CD4-positive, alpha-beta memory T cell (primary cell): ENCODE measurements at regions of chr12 and their contacts with region 1.

Region 1: DNA sequence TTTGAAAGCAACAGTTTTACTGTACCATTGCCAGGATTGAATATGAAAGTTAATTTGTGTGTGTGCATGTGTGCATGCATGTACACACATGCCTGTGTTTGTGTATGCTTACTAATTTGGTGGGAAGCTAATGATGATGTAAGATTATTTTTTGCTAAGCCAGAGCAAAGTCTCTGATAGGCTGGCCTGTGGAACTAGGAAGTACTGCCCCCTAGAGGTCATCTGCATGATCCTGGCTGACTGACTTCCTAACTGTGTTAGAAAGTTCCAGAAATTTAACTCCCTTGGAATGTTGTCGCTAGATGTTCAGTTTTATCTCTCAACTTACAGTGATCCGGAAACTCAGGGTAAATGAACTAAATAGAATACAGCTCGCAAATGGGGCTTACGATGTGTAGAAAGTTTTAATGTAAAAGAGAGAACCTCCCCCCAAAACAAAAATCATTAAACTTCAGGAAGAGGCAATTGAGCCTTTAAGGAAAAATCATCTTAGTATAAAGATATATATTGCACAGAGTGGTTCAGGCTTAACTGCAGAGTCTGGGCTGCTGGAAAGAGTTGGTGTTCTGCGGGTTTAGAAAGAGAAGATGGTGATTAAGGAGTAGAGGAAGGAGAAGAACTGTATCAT is 34.3 kb upstream of the SLC38A1 start:
- DNase-seq: peak; percentile 52 to 69 (median 62)
- H3K4me3 ChIP-seq: no peak overlapping the region
- H3K4me3 Mint-ChIP-seq: no peak overlapping the region
- H3K27ac ChIP-seq: no peak overlapping the region
- H3K27ac Mint-ChIP-seq: no peak overlapping the region
- H3K4me1 ChIP-seq: no peaks in the 10 kb centered on the region
- H3K4me1 Mint-ChIP-seq: peaks cover 3 to 4% (median 4%) of the 10 kb centered on the region in 4 donors
- H3K27me3 ChIP-seq: no peaks in the 10 kb centered on the region
- H3K27me3 Mint-ChIP-seq: no peaks in the 10 kb centered on the region

Region 2: DNA sequence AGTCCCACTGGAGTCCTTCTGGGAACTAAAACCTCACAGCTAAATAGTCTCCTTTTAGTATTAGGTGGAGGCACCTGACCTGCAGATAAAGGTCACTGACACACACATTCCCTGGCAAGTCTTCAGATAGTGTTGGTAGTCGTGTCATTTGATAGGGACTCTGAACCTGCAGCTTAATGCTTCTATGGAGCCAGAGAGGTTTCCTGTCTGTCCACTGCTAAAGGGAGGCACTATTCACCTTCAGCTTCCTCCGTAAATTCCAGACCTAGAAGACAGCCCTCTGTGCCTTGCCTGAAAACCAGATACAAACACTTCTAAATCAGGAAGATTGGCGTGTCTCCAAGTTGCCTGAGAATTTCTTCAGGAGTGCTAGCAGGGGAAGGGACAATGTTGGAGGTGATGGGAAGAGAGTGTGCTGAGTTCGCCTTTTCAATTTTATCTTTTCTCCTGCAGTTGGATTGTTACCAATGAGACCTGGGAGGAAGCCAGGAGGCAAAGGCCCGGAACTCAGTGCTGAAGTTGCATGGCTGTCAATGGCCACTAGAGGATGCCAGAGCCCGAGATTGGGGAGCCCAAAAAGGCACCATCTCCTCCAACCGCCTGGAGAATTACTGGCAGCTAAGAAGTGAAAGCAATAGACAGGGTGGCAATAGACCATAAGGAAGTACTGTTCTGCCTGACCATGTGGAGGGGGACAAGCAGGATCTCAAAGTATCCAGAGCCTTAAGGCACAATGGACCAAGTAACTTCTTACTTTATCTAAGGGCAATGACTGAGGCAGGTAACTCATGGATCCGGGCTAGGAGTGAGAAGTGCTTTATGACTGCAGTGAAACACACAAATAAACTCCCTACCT is 231.2 kb before region 1 on chr12:
- CTCF ChIA-PET with region 1: interaction called, 3 read pairs
- POLR2A ChIA-PET with region 1: no interaction called
- intact Hi-C with region 1: loop called (anchors 1 kb)
- DNase-seq: peak; percentile 42 to 68 (median 48)
- H3K4me3 ChIP-seq: no peak overlapping the region
- H3K4me3 Mint-ChIP-seq: no peak overlapping the region
- H3K27ac ChIP-seq: no peak overlapping the region
- H3K27ac Mint-ChIP-seq: peak overlapping the region in 2 of 7 donors; percentile 2 to 15
- H3K4me1 ChIP-seq: no peaks in the 10 kb centered on the region
- H3K4me1 Mint-ChIP-seq: peaks cover 0 to 5% (median 2%) of the 10 kb centered on the region in 4 donors
- H3K27me3 ChIP-seq: no peaks in the 10 kb centered on the region
- H3K27me3 Mint-ChIP-seq: peaks cover 3 to 5% of the 10 kb centered on the region in 2 donors

Region 3: DNA sequence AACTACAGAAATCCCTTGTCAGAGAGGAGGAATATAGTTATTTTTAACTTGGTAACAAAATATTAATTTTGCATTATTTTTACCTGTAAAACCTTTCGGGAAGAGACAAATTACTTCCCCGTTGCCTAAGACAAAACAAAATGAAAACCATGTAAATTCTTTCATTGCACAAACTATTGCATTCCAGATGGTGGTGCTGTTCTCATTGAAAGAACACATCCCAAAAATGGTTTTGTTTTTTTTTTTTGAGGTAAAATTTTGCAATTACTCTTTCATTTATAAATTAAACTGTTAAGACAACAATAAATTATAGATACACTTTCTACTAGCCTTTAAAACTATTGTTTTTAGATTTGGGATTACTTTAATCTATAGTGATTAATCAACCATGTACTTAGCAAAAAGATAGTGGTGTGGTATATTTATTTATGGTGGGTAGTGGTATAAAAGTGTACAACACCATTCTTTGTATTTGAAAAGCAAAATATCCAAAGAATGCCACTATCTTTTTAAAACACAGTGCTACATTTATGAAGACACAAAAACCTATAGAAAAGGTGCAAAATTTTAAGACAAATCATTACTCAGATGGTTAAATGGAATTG is 149.8 kb before region 1 on chr12:
- CTCF ChIA-PET with region 1: interaction called, 76 read pairs
- POLR2A ChIA-PET with region 1: no interaction called
- intact Hi-C with region 1: loop called (anchors 1 kb)
- DNase-seq: peak in 4 of 5 donors; percentile 38 to 50 (median 45)
- H3K4me3 ChIP-seq: no peak overlapping the region
- H3K4me3 Mint-ChIP-seq: no peak overlapping the region
- H3K27ac ChIP-seq: no peak overlapping the region
- H3K27ac Mint-ChIP-seq: no peak overlapping the region
- H3K4me1 ChIP-seq: peaks cover 11% of the 10 kb centered on the region
- H3K4me1 Mint-ChIP-seq: peaks cover 0 to 11% (median 9%) of the 10 kb centered on the region in 4 donors
- H3K27me3 ChIP-seq: no peaks in the 10 kb centered on the region
- H3K27me3 Mint-ChIP-seq: peaks cover under 1 to 4% of the 10 kb centered on the region in 2 donors

Region 4: DNA sequence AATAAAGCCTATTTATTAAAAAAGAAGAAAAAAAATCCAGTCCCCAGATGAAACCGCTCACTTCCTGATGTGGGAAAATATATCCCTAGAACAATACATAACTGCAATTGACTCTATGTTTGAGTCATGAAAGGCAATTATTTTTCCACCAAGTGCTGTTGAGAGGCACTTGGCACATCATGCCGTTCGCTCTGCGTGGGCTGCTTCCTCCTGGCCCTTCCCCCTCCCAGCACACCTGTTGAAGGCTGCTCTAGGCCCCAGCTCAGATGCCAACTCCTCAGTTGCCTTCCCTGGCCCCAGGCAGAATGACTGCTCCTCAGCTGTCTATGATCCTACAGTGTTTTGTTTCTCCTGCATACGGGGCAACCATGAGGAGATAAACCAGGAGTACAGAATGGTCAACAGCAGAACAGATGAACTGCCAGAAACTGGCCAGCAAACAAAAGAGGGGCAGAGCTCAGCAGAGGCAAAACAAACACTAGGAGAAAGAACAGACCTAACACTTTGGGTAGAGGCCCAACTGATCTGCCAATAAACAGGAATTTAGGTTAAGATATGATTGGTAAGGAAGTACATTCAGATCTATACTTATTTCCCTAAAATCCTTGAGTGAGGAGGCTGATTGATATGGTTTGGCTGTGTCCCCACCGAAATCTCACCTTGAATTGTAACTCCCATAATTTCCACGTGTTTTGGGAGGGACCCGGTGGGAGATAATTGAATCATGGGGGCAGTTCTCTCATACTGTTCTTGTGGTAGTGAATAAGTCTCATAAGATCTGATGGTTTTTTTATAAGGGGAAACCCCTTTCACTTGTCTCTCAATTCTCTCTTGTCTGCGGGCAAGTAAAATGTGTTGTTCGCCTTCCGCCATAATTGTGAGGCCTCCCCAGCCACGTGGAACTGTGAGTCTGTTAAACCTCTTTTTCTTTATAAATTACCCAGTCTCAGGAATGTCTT is 93.0 kb before region 1 on chr12:
- CTCF ChIA-PET with region 1: interaction called, 21 read pairs
- POLR2A ChIA-PET with region 1: interaction called, 5 read pairs
- intact Hi-C with region 1: loop called (anchors 1 kb)
- DNase-seq: peak; percentile 55 to 81 (median 62)
- H3K4me3 ChIP-seq: no peak overlapping the region
- H3K4me3 Mint-ChIP-seq: peak overlapping the region in 7 of 8 donors; percentile 56 to 83 (median 66)
- H3K27ac ChIP-seq: peak overlapping the region; percentile 87
- H3K27ac Mint-ChIP-seq: peak overlapping the region; percentile 96 to 100 (median 99)
- H3K4me1 ChIP-seq: peaks cover 79% of the 10 kb centered on the region
- H3K4me1 Mint-ChIP-seq: peaks cover 68 to 83% (median 76%) of the 10 kb centered on the region in 4 donors
- H3K27me3 ChIP-seq: no peaks in the 10 kb centered on the region
- H3K27me3 Mint-ChIP-seq: no peaks in the 10 kb centered on the region

Region 5: DNA sequence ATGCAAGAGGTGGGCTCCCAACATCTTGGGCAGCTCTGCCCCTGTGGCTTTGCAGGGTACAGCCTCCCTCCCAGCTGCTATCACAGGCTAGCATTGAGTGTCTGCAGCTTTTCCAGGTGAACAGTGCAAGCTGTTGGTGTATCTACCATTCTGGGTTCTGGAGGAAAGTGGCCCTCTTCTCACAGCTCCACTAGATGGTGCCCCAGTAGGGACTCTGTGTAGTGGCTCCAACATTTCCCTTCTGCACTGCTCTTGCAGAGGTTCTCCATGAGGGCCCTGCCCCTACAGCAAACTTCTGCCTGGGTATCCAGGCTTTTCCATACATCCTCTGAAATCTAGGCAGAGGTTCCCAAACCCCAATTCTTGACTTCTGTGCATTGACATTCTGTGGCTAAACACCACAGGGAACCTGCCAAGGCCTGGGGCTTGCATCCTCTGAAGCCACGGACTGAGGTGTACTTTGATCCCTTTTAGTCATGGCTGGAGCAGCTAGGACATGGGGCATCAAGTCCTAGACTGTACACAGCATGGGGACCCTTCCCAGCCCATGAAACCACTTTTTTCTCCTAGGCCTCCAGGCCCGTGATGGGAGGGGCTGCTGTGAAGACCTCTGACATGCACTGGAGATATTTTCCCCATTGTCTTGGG is 10.3 kb before region 1 on chr12:
- CTCF ChIA-PET with region 1: interaction called, 10 read pairs
- POLR2A ChIA-PET with region 1: no interaction called
- intact Hi-C with region 1: no loop called
- DNase-seq: no peak
- H3K4me3 ChIP-seq: no peak overlapping the region
- H3K4me3 Mint-ChIP-seq: no peak overlapping the region
- H3K27ac ChIP-seq: no peak overlapping the region
- H3K27ac Mint-ChIP-seq: no peak overlapping the region
- H3K4me1 ChIP-seq: no peaks in the 10 kb centered on the region
- H3K4me1 Mint-ChIP-seq: no peaks in the 10 kb centered on the region
- H3K27me3 ChIP-seq: no peaks in the 10 kb centered on the region
- H3K27me3 Mint-ChIP-seq: no peaks in the 10 kb centered on the region

Region 6: GRCh38 chr12:46318037-46318436 is 14.9 kb after region 1 on chr12:
- CTCF ChIA-PET with region 1: interaction called, 13 read pairs
- POLR2A ChIA-PET with region 1: no interaction called
- intact Hi-C with region 1: no loop called
- DNase-seq: no peak
- H3K4me3 ChIP-seq: no peak overlapping the region
- H3K4me3 Mint-ChIP-seq: no peak overlapping the region
- H3K27ac ChIP-seq: no peak overlapping the region
- H3K27ac Mint-ChIP-seq: no peak overlapping the region
- H3K4me1 ChIP-seq: no peaks in the 10 kb centered on the region
- H3K4me1 Mint-ChIP-seq: no peaks in the 10 kb centered on the region
- H3K27me3 ChIP-seq: no peaks in the 10 kb centered on the region
- H3K27me3 Mint-ChIP-seq: peaks cover 9% of the 10 kb centered on the region in 2 donors